Activated CD8-positive, alpha-beta T cell treated with anti-CD3 and anti-CD28 coated beads, Interleukin-2, amount 10 ng/mL, durations not matched to agents 7 days and 5 days (primary cell): ENCODE measurements at regions of chr22 and their contacts with region 1.

Region 1: GRCh38 chr22:36331306-36331911 is 56.4 kb downstream of the MYH9 start:
- DNase-seq: peak; percentile 91
- ATAC-seq: peak; percentile 59
- H3K4me3 Mint-ChIP-seq: peak overlapping the region; percentile 85
- H3K27ac Mint-ChIP-seq: peak overlapping the region; percentile 99
- H3K4me1 Mint-ChIP-seq: peaks cover 99% of the 10 kb centered on the region
- H3K27me3 Mint-ChIP-seq: no peaks in the 10 kb centered on the region

Region 2: DNA sequence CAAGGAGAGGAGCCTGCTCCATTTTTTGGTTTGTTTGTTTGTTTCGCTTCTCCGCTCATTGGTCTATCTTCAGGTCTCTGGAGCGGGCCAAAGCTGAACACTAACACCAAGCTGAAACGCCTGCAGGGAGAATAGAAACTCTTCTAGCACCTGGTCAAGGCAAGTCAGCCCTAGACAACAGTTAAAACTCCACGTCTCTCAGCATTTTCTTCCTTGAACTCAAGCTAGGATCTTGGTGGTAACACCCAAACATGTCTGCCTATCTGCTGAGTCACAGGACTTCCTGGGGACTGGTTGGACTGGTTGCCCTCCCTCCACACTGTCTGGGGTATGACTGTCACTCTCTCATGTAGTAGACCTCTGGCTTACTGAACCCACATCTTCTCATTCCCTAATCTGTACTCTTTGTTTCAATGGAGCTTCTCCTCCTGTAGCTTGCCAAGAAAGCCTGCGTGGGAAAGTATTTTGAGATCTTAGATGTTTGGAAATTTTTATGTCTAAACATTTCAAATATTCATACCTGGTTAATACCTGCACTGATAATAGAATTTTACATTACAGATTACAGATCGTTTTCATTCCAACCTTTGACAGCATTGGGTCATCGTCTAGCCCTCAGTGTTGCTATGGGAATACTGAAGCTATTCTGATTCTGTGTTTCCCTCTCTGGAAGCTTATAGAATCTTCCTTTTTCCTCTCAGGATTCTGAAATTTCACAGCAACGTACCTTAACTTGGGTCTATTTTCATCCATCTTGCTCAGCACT is 278.7 kb before region 1 on chr22:
- CTCF ChIA-PET with region 1: no interaction called
- POLR2A ChIA-PET with region 1: no interaction called
- DNase-seq: peak; percentile 24
- ATAC-seq: peak; percentile 47
- H3K4me3 Mint-ChIP-seq: no peak overlapping the region
- H3K27ac Mint-ChIP-seq: no peak overlapping the region
- H3K4me1 Mint-ChIP-seq: peaks cover 10% of the 10 kb centered on the region
- H3K27me3 Mint-ChIP-seq: peaks cover 5% of the 10 kb centered on the region

Region 3: DNA sequence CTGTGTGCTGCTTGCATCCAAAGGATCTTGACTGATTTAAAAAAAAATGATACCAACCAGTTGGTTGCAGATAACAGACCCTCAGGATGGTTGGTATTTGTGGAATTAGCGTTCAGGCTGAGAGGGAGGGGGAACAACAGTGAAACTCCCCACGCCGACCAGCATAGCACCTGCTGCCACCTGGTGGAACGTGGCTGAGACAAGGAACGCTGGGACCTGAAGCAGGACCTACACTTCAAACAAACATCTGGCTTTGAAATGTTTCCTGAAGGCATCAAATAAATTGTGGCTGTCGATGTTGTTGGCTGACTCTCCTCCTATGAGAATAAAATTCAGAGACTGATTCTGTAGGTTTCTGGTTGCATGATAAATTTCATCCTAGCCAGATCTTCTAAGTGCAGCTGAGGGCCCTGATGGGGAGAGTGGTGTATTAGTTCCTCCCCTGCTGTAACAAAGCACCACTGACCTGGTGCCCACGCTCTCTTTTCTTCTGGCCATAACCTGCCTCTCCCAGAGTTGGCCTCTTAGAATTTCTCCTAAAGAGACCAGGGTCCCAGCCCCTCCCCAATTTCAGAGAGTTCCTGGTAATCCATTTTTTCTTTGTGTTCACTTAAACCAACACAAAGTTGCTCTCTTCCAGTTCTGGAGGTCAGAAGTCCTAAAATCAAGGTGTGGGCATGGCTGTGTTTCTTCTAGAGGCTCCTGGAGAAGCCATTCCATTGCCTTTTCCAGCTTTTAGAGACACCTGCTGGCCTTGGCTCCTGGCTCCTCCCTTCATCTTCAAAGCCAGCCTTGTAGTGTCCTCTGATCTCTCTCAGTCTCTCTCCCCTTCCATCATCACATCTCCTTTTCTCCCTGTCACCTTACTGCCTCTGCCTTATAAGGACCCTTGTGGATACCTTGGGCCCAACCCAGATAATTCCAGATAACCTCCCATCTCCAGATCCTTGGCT is 109.3 kb before region 1 on chr22:
- CTCF ChIA-PET with region 1: no interaction called
- POLR2A ChIA-PET with region 1: no interaction called
- DNase-seq: peak; percentile 73
- ATAC-seq: peak; percentile 94
- H3K4me3 Mint-ChIP-seq: no peak overlapping the region
- H3K27ac Mint-ChIP-seq: no peak overlapping the region
- H3K4me1 Mint-ChIP-seq: peaks cover 12% of the 10 kb centered on the region
- H3K27me3 Mint-ChIP-seq: peaks cover 29% of the 10 kb centered on the region

Region 4: GRCh38 chr22:36301384-36301828 is 30.0 kb before region 1 on chr22:
- CTCF ChIA-PET with region 1: interaction called, 22 read pairs
- POLR2A ChIA-PET with region 1: interaction called, 4 read pairs
- DNase-seq: peak; percentile 87
- ATAC-seq: peak; percentile 84
- H3K4me3 Mint-ChIP-seq: no peak overlapping the region
- H3K27ac Mint-ChIP-seq: peak overlapping the region; percentile 29
- H3K4me1 Mint-ChIP-seq: peaks cover 12% of the 10 kb centered on the region
- H3K27me3 Mint-ChIP-seq: no peaks in the 10 kb centered on the region

Region 5: GRCh38 chr22:36359181-36359996 is 28.0 kb after region 1 on chr22:
- CTCF ChIA-PET with region 1: interaction called, 15 read pairs
- POLR2A ChIA-PET with region 1: interaction called, 17 read pairs
- DNase-seq: no peak
- ATAC-seq: no peak
- H3K4me3 Mint-ChIP-seq: peak overlapping the region; percentile 13
- H3K27ac Mint-ChIP-seq: peak overlapping the region; percentile 74
- H3K4me1 Mint-ChIP-seq: peaks cover 94% of the 10 kb centered on the region
- H3K27me3 Mint-ChIP-seq: no peaks in the 10 kb centered on the region

Region 6: DNA sequence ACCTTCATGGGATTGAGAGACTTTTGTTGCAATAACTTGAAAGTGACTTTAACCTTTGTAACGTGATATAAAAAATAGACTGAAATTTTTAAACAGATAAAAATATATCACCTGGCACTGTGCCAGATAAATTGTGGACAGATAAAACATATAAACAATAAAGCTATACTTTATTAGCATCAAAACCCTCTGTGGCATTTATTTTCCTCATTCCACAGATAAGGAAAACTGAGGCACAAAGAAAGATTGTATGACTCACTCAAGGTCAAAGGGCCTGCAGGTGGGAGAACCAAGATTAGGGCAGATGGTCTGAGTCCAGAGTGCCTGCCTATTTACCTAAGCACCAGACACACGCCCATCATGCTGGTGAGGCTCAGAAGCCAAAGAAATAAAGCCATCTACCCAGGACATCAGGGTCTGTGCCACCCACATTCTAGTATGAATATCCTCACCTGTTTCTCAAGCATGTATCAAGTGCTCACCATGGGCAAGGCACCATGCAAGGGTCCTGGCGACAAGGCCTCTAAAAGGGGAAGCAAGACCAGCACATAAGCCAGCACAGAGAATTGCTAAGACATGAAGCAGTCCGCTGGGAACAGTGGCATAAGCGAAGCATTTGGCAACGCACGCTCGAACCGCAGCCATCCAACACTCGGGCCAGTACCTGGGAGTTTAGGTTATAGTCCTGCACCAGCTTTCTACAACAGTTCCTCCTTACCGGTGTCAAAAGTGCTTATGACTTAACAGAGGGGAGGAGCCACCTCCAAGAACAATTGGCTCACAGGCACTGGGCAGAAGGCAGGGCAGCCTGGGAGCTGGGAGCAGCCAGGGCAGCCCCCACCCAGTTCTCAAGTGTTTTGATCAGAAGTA is 38.7 kb after region 1 on chr22:
- CTCF ChIA-PET with region 1: interaction called, 20 read pairs
- POLR2A ChIA-PET with region 1: interaction called, 60 read pairs
- DNase-seq: no peak
- ATAC-seq: peak; percentile 39
- H3K4me3 Mint-ChIP-seq: peak overlapping the region; percentile 78
- H3K27ac Mint-ChIP-seq: peak overlapping the region; percentile 88
- H3K4me1 Mint-ChIP-seq: peaks cover 96% of the 10 kb centered on the region
- H3K27me3 Mint-ChIP-seq: no peaks in the 10 kb centered on the region

Region 7: GRCh38 chr22:36387752-36388518 is 56.5 kb after region 1 on chr22 and contains the start of gene MYH9:
- CTCF ChIA-PET with region 1: interaction called, 28 read pairs
- POLR2A ChIA-PET with region 1: interaction called, 37 read pairs
- DNase-seq: peak; percentile 100
- ATAC-seq: peak; percentile 85
- H3K4me3 Mint-ChIP-seq: peak within 1 kb of the TSS; percentile 88
- H3K27ac Mint-ChIP-seq: peak within 1 kb of the TSS; percentile 92
- H3K4me1 Mint-ChIP-seq: peaks cover 45% of the 10 kb centered on the region
- H3K27me3 Mint-ChIP-seq: no peaks in the 10 kb centered on the region
- total RNA-seq, gene MYH9: 857 to 883 TPM